Right ventricle myocardium inferior (tissue), 1 donor: ENCODE measurements at regions of chr9 and their contacts with region 1.

Region 1: GRCh38 chr9:131370638-131371037 is 23.2 kb upstream of the PRRC2B start:
- DNase-seq: no peak
- ATAC-seq: no peak

Region 2: GRCh38 chr9:131393622-131394463 is 23.2 kb after region 1 on chr9 and contains the start of gene PRRC2B:
- intact Hi-C with region 1: loop called (anchors 1 kb)
- DNase-seq: peak; percentile 94
- ATAC-seq: peak; percentile 85
- total RNA-seq, gene PRRC2B: 142 TPM

Region 3: DNA sequence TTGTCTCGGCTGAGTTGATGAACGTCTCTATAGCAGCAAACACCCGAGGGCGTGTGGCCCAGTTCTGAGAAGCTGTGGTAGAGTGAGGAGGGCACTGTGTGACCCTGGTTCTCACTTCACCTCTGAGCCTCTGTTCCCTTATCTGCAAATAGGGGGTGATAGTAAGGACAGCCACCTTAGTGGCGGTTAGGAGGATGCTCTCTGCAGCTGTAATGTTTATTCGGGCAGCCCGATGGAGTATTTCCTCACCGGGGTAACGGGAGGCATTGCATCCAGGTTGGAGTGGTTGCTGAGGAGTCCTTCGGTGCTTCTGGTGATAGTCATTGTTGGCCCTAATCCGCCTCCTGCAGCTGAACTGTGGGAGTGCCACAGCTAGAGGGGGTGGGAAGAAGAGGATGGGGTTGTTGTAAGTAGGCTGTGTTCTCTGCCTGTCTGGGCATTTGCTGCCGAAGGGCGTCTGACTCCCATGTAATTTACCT is 37.1 kb after region 1 on chr9:
- intact Hi-C with region 1: loop called (anchors 5 kb)
- DNase-seq: no peak
- ATAC-seq: peak; percentile 57

Region 4: DNA sequence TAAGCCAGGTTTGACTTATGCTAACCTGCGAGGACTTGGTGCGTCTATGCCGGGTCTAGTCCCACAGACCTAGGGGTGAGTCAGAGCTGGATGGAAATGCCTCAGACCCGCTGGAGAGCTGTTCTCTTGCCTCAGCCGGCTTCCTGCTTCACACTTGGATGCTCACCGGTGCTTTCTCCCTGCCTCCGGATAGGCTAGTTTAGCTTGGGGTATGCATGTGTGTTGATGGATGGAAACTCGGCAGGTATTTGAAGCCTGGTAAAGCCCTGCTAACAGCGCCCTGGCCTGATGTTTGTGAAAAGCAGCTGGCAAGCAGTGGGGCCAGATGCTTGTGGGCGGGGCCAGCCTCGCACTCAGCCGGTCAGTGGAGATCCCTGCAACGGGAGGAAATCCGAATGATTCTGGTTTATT is 52.5 kb after region 1 on chr9:
- intact Hi-C with region 1: loop called (anchors 5 kb)
- DNase-seq: no peak
- ATAC-seq: peak; percentile 69

Region 5: GRCh38 chr9:131478421-131478868 is 107.8 kb after region 1 on chr9:
- intact Hi-C with region 1: loop called (anchors 5 kb)
- DNase-seq: no peak
- ATAC-seq: no peak